Adrenal gland (tissue), 19 donors: ENCODE measurements at regions of chr15 and their contacts with region 1.

Region 1: DNA sequence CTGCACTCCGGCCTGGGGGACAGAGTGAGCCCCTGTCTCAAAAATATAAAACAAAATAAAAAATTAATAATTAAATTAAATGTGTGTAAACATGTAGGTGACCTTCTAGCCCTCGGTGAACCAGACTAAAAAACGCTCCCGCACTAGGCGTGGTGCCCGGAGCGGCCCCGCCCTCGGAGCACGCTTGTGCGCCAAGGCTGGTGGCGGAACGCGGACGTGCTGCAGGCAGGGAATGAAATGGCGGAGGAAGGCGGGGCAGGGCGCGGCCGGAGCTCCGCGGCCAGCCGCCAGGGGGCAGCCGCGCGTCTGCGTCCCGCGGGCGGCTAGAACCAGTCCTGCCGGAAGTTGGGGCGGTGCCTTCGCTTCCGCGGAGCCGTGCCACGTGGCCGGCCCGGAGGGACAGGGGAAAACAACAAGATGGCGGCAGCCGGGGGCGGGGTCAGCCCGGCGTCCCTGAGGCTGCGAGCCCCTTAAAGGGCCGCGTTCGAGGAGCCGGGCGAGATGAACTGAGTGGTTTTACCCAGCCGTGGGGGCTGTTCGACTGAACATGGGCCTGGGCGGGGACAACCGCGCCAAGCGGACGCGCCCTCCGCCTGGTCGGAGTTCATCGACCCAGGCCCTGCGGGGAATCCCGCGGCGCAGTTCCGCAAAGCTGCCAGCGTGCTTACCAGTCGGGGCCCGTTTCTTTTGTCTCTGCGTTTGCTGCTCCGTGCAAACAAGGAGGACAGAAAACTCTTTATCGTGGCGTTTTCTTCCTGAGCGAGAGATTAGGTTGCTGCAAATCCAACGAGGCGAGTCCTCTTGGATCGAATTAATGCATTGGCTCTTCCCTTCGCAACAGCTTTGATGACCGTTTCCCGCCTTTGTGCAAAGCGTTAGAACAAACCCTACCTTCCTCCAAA is 90.9 kb upstream of the CHD2 start:
- DNase-seq: peak; percentile 97 to 99 (median 98)
- H3K4me3 ChIP-seq: peak overlapping the region in 3 of 4 donors; percentile 37 to 66 (median 46)
- H3K27ac ChIP-seq: peak overlapping the region; percentile 87 to 99 (median 93)
- H3K4me1 ChIP-seq: peaks cover 14 to 39% of the 10 kb centered on the region in 2 donors
- H3K27me3 ChIP-seq: no peaks in the 10 kb centered on the region
- CTCF ChIP-seq: peak; percentile 78 to 100 (median 93)
- POLR2A ChIP-seq: peak; percentile 66 to 86

Region 2: GRCh38 chr15:92881802-92882696 is 72.8 kb after region 1 on chr15:
- intact Hi-C with region 1: loop called in 1 of 2 experiments (anchors 5 kb)
- DNase-seq: peak; percentile 98 to 100 (median 99)
- H3K4me3 ChIP-seq: peak overlapping the region in 1 of 4 donors; percentile 99
- H3K27ac ChIP-seq: peak overlapping the region; percentile 74 to 100 (median 91)
- H3K4me1 ChIP-seq: peaks cover 28 to 42% of the 10 kb centered on the region in 2 donors
- H3K27me3 ChIP-seq: no peaks in the 10 kb centered on the region
- CTCF ChIP-seq: no peak
- POLR2A ChIP-seq: peak; percentile 84 to 93

Region 3: DNA sequence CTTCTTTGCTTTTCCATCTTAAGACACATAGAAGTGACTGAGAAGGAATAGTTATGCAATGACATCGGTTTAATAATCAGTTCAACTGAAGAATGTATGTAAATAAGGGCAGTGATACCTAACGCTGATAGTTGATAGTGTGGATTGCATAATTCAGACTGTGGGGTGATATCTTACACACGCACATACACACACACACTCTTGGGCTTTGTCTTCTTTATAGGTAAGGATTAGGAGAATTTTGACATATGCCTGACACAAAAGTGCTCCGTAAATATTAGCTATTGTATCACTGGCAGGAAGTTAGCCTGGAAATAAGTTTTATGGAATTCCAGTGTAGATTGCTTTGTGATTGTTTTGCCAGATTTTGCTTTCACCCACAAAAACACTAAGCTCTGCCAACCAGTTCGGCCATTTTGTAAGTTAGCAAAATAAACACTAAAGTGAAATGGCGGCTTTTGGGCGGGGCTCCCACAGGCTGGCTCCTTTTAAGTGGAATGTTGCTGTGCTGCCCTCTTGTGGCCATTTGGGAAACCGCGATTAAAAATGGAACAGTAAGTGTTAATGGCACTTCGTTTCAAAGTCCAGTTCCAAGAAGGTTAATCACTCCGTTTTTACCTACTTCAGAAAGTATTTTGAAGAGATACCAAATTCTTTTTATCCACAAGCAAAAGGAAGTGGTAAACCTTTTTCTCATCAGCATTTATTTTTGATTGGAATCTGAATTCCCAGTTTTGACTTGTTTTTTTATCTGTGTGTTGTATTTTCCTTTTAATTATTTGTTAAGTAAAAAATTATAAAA is 108.6 kb after region 1 on chr15:
- intact Hi-C with region 1: loop called (anchors 5 to 10 kb)
- DNase-seq: peak; percentile 92 to 99 (median 96)
- H3K4me3 ChIP-seq: no peak overlapping the region
- H3K27ac ChIP-seq: peak overlapping the region; percentile 33 to 92 (median 71)
- H3K4me1 ChIP-seq: peaks cover 43 to 81% of the 10 kb centered on the region in 2 donors
- H3K27me3 ChIP-seq: no peaks in the 10 kb centered on the region
- CTCF ChIP-seq: peak; percentile 91 to 97 (median 95)
- POLR2A ChIP-seq: no peak

Region 4: DNA sequence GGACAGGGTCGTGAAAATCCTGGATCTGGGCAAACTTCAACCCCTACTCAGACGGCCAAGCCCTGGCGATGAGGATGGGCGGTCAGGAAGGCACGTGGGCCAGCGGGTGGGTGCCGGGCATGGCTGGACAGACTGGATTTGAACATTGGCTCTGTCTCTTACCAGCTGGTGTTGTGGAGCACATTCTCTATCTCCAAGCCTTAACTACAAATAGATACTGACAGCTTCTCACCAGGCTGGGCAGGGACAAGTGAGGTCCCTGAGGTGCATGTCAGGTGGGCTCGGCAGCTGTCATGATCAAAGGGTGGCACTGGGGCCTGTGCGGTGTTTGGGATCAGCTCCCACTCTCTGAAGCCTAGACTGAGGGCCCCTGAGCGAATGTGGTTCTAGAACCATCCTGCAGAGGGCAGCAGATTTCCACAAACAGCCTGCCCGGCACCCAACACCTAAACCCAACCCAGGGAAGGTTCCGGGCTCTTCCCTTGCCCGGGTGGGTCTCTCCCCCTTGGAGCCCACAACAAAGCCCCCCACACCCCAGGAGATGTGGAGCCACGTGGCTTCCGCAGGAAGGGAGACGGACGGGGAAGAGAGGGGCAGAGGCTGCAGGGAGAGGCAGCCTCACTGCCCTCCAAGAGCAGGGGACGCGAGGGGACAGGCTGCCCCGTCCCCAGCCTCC is 221.3 kb after region 1 on chr15:
- intact Hi-C with region 1: loop called in 1 of 2 experiments (anchors 10 kb)
- DNase-seq: peak; percentile 68 to 90 (median 79)
- H3K4me3 ChIP-seq: no peak overlapping the region
- H3K27ac ChIP-seq: peak overlapping the region in 3 of 5 donors; percentile 74 to 96 (median 85)
- H3K4me1 ChIP-seq: peaks cover 24 to 40% of the 10 kb centered on the region in 2 donors
- H3K27me3 ChIP-seq: no peaks in the 10 kb centered on the region
- CTCF ChIP-seq: peak; percentile 69 to 90 (median 83)
- POLR2A ChIP-seq: no peak